Caco-2 (cell line): ENCODE measurements at regions of chr2 and their contacts with region 1.

Region 1: DNA sequence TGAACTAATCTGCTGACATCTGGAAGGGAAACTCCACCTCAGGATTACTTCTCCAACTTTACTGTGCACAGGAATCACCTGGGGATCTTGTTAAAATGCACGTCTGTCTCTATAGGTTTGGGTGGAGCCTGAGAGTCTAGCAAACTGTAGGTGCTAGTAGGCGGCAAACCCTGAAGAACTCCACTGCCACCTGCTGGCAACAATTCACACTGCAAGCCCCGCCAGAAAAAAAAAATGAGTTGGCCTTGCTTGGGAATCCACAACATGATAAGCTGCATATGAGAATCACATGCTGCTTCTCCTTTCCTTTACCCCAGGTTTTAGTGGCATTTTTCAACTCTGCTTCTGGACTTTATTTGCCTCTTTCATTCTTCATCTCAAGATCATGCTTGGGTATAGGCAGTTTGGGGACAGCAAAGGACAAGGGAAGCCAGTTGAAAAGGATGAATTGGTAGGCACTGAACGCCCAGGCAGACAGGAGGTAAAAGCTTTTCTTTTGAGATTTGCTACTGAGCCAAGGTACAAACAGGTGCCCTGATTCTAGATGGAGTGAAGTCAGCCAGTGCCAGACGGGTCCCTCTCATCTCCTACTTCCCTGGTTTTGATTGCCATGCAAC is 88.8 kb downstream of the VIT start:
- DNase-seq: peak; percentile 68 to 88
- H3K4me3 ChIP-seq: no peak overlapping the region
- H3K4me3 Mint-ChIP-seq: no peak overlapping the region
- H3K27ac Mint-ChIP-seq: no peak overlapping the region
- H3K4me1 ChIP-seq: no peaks in the 10 kb centered on the region
- H3K4me1 Mint-ChIP-seq: no peaks in the 10 kb centered on the region
- H3K27me3 ChIP-seq: no peaks in the 10 kb centered on the region
- H3K27me3 Mint-ChIP-seq: peaks cover 10% of the 10 kb centered on the region
- CTCF ChIP-seq: peak; percentile 95 to 96

Region 2: DNA sequence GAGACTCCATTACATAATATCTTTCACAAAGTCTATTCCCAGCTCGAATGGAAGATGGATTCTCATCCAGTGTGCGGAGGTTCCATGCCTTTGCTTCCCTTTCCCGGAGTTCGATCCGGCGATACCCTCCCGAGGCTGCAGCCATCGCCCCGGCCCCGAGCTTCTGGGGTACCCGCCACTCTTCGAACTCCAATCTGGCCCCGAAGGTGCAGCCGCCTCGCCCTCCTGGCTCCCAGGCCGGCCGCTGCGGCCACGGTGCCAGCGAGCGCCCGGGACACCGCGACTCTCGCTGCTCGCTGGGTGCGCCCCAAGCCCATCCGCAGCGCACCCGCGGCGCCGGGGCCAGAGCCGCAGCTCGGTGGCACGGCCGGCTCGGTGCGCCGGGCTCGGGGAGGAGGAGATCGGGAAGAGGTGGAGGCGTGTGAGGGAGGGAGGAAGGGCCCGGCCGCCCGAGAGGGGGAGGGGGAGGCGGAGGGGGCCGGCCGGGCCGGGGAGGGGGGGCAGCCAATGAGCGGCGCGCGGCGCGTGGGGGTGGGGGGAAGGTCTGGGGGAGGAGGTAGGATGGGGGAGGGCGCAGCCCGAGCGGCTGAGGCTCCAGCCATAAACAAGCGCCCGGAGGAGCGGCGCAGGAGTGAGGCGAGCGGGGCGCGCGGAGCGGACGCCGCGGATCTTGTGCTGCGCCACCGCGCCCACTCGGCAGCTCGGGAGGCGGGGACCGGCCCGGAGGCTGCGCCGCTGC is 430.0 kb before region 1 on chr2 and contains the start of gene CRIM1:
- CTCF ChIA-PET with region 1: no interaction called
- POLR2A ChIA-PET with region 1: no interaction called
- intact Hi-C with region 1: loop called (anchors 10 kb)
- DNase-seq: peak; percentile 89 to 91
- H3K4me3 ChIP-seq: peak within 1 kb of the TSS; percentile 97
- H3K4me3 Mint-ChIP-seq: peak within 1 kb of the TSS; percentile 97
- H3K27ac Mint-ChIP-seq: peak within 1 kb of the TSS; percentile 93
- H3K4me1 ChIP-seq: peaks cover 48% of the 10 kb centered on the region
- H3K4me1 Mint-ChIP-seq: peaks cover 56% of the 10 kb centered on the region
- H3K27me3 ChIP-seq: no peaks in the 10 kb centered on the region
- H3K27me3 Mint-ChIP-seq: no peaks in the 10 kb centered on the region
- CTCF ChIP-seq: no peak
- total RNA-seq, gene CRIM1: 270 and 292 TPM in 2 replicates

Region 3: GRCh38 chr2:36670881-36671595 is 114.2 kb before region 1 on chr2:
- CTCF ChIA-PET with region 1: no interaction called
- POLR2A ChIA-PET with region 1: no interaction called
- intact Hi-C with region 1: no loop called
- DNase-seq: no peak
- H3K4me3 ChIP-seq: no peak overlapping the region
- H3K4me3 Mint-ChIP-seq: no peak overlapping the region
- H3K27ac Mint-ChIP-seq: peak overlapping the region; percentile 6
- H3K4me1 ChIP-seq: peaks cover 4% of the 10 kb centered on the region; the same call in 1 of the 2 replicates
- H3K4me1 Mint-ChIP-seq: peaks cover 21% of the 10 kb centered on the region
- H3K27me3 ChIP-seq: no peaks in the 10 kb centered on the region
- H3K27me3 Mint-ChIP-seq: no peaks in the 10 kb centered on the region
- CTCF ChIP-seq: no peak

Region 4: DNA sequence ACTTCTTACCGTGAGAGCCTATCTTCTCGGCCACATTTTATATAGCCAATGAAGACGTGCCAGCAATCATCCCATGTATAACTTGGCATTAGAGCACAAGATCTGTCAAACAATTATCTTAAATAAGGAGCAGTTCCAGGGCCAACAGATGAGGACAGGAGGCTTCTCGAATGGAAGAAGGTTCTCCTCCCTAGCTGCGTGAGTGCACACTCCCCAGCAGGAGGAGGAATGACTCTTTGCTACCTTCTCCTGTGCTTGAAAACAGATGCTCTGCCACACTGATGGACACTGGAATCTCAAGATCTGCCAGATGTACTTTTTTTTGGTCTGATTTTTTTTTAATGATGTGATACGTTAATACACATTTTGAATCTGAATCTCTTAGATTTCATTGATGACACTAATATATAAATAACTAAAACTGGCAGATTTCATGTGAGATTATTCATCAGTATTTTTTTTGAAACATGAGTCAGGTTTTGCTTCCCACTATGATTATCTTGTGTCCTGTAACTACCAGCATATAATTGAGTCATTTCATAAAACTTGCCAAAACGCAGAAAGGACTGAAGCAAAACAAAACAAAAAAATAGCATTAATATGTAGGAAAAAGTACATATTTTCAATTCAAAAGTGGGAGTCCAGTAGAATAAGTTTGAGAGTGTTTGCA is 89.4 kb before region 1 on chr2:
- CTCF ChIA-PET with region 1: interaction called, 7 read pairs
- POLR2A ChIA-PET with region 1: no interaction called
- intact Hi-C with region 1: loop called (anchors 1 kb)
- DNase-seq: peak in 1 of 2 experiments; percentile 44
- H3K4me3 ChIP-seq: no peak overlapping the region
- H3K4me3 Mint-ChIP-seq: no peak overlapping the region
- H3K27ac Mint-ChIP-seq: no peak overlapping the region
- H3K4me1 ChIP-seq: peaks cover 20% of the 10 kb centered on the region
- H3K4me1 Mint-ChIP-seq: peaks cover 18% of the 10 kb centered on the region
- H3K27me3 ChIP-seq: no peaks in the 10 kb centered on the region
- H3K27me3 Mint-ChIP-seq: no peaks in the 10 kb centered on the region
- CTCF ChIP-seq: peak; percentile 31 to 49

Region 5: DNA sequence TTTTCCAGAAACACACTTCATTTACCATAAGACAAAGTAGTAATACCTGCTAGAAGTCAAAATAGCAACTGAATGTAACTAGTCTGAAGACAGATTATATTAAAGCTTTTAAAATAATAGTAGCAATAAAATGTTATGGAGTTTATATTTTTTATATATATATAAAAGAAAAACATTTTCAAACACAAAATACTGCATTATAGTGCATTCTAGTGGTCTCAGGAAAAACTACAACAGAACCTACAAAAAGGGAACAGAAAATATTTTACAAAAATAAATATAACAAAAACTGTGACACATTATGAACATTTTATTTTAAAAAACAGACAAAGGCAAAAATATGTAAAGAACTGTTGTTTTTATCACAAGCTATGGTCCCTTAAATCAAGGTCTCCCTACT is 133.0 kb after region 1 on chr2:
- CTCF ChIA-PET with region 1: interaction called, 8 read pairs
- POLR2A ChIA-PET with region 1: no interaction called
- intact Hi-C with region 1: loop called (anchors 2 kb)
- DNase-seq: no peak
- H3K4me3 ChIP-seq: no peak overlapping the region
- H3K4me3 Mint-ChIP-seq: no peak overlapping the region
- H3K27ac Mint-ChIP-seq: peak overlapping the region; percentile 80
- H3K4me1 ChIP-seq: peaks cover 30% of the 10 kb centered on the region
- H3K4me1 Mint-ChIP-seq: peaks cover 22% of the 10 kb centered on the region
- H3K27me3 ChIP-seq: no peaks in the 10 kb centered on the region
- H3K27me3 Mint-ChIP-seq: no peaks in the 10 kb centered on the region
- CTCF ChIP-seq: peak in 1 of 2 experiments; percentile 21

Region 6: DNA sequence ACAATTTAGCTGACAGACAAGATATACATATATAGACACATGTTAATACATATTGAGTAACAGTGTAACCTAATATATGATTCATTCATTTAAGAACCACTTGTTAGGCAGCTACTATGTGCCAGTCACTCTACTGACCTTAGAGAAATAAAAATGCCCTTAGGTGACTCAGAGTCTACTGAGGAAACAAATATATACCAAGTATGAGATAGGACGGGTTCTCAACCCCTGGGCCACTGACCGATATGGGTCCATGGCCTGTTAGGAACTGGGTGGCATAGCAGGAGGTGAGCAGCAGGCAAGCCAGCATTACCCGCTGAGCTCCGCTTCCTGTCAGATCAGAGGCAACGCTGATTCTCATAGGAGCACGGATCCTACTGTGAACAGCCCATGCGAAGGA is 166.3 kb after region 1 on chr2:
- CTCF ChIA-PET with region 1: no interaction called
- POLR2A ChIA-PET with region 1: no interaction called
- intact Hi-C with region 1: no loop called
- DNase-seq: no peak
- H3K4me3 ChIP-seq: no peak overlapping the region
- H3K4me3 Mint-ChIP-seq: no peak overlapping the region
- H3K27ac Mint-ChIP-seq: no peak overlapping the region
- H3K4me1 ChIP-seq: peaks cover 11% of the 10 kb centered on the region
- H3K4me1 Mint-ChIP-seq: peaks cover 19% of the 10 kb centered on the region
- H3K27me3 ChIP-seq: no peaks in the 10 kb centered on the region
- H3K27me3 Mint-ChIP-seq: no peaks in the 10 kb centered on the region
- CTCF ChIP-seq: no peak

Region 7: DNA sequence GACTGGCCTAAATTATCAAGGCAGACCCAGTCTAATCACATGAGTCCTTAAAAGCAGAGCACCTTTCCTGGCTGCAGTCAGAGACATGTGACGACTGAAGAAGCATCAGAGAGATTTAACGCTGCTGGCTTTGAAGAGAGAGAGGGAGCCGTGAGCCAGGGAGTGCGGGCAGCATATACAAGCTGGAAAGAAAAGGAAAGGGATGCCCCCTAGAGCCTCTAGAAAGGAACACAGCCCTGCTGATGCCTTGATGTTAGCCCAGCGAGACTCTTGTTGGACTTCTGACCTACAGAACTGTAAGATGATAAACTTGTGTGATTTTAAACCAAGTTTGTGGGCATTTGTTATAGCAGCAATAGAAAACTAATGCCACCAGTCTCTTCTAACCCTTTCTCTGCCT is 240.8 kb after region 1 on chr2:
- CTCF ChIA-PET with region 1: no interaction called
- POLR2A ChIA-PET with region 1: no interaction called
- intact Hi-C with region 1: loop called (anchors 1 kb)
- DNase-seq: peak in 1 of 2 experiments; percentile 25
- H3K4me3 ChIP-seq: no peak overlapping the region
- H3K4me3 Mint-ChIP-seq: no peak overlapping the region
- H3K27ac Mint-ChIP-seq: no peak overlapping the region
- H3K4me1 ChIP-seq: no peaks in the 10 kb centered on the region
- H3K4me1 Mint-ChIP-seq: no peaks in the 10 kb centered on the region
- H3K27me3 ChIP-seq: no peaks in the 10 kb centered on the region
- H3K27me3 Mint-ChIP-seq: no peaks in the 10 kb centered on the region
- CTCF ChIP-seq: peak; percentile 13 to 18

Region 8: GRCh38 chr2:37052600-37053332 is 267.5 kb after region 1 on chr2:
- CTCF ChIA-PET with region 1: no interaction called
- POLR2A ChIA-PET with region 1: no interaction called
- intact Hi-C with region 1: no loop called
- DNase-seq: no peak
- H3K4me3 ChIP-seq: no peak overlapping the region
- H3K4me3 Mint-ChIP-seq: no peak overlapping the region
- H3K27ac Mint-ChIP-seq: no peak overlapping the region
- H3K4me1 ChIP-seq: no peaks in the 10 kb centered on the region
- H3K4me1 Mint-ChIP-seq: no peaks in the 10 kb centered on the region
- H3K27me3 ChIP-seq: no peaks in the 10 kb centered on the region
- H3K27me3 Mint-ChIP-seq: no peaks in the 10 kb centered on the region
- CTCF ChIP-seq: no peak

Region 9: DNA sequence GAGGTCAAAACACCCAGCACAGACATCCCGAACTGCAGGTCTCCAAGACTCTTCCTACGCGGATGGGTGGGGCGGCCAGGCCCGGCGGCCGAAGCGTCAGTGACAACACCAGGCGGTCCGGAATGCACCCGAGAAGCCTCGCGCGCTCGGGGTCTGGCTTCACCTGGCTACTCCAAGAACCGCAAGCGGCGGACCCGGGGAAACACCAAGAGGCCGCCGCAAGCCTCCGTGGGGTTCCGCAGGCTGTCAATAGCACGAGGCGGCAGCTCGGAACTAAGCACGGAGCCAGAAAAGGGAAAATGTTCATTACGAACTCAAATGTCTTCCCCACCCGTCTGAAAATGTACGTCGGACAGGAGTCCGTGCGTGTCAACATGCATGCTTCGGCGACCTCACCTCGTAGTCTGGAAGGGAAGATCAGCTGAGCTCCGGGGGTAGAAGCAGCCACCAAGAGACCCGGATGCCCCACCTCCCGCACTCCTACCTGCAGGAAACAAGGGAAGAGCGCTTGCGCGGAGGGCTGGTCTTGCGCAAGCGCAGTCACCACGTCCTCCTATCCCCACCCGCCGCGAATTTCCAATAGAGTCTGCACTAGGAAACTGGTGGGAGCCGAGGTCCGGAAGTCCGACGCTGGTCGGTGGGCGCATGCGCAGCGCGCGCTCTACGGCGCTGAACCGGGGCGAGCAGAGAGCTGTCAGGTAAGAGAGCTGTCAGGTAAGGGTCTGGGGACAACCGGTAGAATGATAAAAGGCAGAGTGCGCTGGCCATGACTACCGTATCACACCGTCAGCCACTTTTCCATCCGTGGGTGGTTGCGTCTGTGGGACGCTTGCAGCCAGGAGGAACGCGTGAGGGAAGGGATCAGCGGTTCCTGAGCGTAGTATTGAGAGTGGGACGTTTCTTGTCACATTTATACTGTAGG is 298.8 kb after region 1 on chr2 and contains the starts of genes GPATCH11 and HEATR5B:
- CTCF ChIA-PET with region 1: interaction called, 3 read pairs
- POLR2A ChIA-PET with region 1: no interaction called
- intact Hi-C with region 1: loop called (anchors 1 kb)
- DNase-seq: peak; percentile 98 to 99
- H3K4me3 ChIP-seq: peak within 1 kb of the TSS; percentile 78
- H3K4me3 Mint-ChIP-seq: no peak within 1 kb of the TSS
- H3K27ac Mint-ChIP-seq: no peak within 1 kb of the TSS
- H3K4me1 ChIP-seq: peaks cover 16% of the 10 kb centered on the region
- H3K4me1 Mint-ChIP-seq: peaks cover 8% of the 10 kb centered on the region
- H3K27me3 ChIP-seq: no peaks in the 10 kb centered on the region
- H3K27me3 Mint-ChIP-seq: no peaks in the 10 kb centered on the region
- CTCF ChIP-seq: no peak
- total RNA-seq, gene GPATCH11: 7.5 and 8.3 TPM in 2 replicates
- total RNA-seq, gene HEATR5B: 15.3 and 16.1 TPM in 2 replicates

Region 10: GRCh38 chr2:37421686-37422085 is 636.4 kb after region 1 on chr2:
- CTCF ChIA-PET with region 1: no interaction called
- POLR2A ChIA-PET with region 1: no interaction called
- intact Hi-C with region 1: no loop called
- DNase-seq: no peak
- H3K4me3 ChIP-seq: no peak overlapping the region
- H3K4me3 Mint-ChIP-seq: no peak overlapping the region
- H3K27ac Mint-ChIP-seq: no peak overlapping the region
- H3K4me1 ChIP-seq: peaks cover 4% of the 10 kb centered on the region
- H3K4me1 Mint-ChIP-seq: peaks cover 6% of the 10 kb centered on the region
- H3K27me3 ChIP-seq: no peaks in the 10 kb centered on the region
- H3K27me3 Mint-ChIP-seq: no peaks in the 10 kb centered on the region
- CTCF ChIP-seq: no peak